Posterior cingulate gyrus (tissue), 11 donors: ENCODE measurements at regions of chr4 and their contacts with region 1.

Region 1: DNA sequence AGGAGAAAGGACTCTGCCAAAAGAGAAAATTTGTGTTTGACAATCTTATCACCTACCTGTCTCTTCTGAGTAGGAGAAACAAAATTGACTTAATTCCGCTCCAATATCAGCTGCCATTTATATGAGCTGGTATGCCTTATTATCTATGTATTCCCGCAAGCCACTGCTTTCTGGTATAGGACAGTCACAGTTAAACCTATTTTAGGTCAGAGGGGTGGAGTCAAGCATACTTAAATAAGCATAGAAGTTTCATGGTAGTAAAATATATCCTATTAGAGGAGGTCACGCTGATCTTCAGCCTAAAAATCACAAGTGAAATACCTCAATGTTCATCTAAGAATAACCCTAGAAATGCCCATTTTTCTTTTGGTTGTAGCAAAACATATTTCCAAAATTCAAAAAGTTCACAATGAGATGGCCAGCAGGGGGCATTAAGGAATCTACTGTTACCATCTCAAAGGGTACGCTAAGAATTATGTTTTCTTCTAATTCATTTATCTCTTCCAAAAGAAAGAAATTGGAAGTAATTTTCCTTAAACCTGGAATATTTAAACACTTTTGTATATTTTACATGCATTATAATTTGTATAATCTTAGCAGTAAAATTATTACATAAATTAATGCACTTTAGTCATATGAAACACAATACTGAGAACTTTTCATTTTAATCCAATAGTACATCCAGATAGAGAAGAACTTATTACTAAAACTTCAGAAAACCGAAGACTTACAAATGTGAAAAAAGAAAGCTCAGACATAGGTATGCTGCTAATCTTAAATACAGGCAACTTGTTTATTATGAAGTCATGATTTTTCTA is 10.5 kb downstream of the PPAT start:
- DNase-seq: peak in 1 of 10 donors; percentile 30

Region 2: DNA sequence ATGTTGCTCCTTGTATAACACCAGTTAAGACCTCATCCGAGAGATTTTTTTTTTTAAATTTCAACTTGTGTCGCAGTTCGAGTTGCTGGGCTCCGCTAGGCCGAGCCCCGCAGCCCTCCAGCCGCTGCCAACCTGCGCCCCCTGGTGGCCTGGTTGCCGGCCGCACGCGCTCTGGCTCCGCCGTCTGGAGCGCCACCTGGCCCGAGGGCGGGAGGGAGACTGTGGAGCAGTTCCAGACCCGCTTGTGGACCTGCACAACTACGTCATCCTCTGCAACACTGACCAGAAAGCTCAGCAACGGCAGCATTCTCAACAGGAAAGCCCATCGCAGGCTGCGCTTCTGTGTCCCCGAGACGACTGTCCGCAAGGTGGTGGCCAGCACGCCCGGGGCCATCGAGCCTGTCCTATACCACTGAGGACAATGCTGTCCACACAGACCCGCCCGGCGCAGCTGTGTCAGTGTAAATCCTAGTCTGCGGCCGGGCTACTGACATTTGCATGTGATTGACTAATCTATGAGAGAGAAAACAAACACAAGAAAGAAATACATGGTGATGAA is 119.7 kb after region 1 on chr4:
- intact Hi-C with region 1: loop called (anchors 1 kb)
- DNase-seq: peak; percentile 80 to 98 (median 90)

Region 3: GRCh38 chr4:56828784-56829535 is 404.1 kb after region 1 on chr4:
- intact Hi-C with region 1: loop called (anchors 10 kb)
- DNase-seq: no peak

Region 4: DNA sequence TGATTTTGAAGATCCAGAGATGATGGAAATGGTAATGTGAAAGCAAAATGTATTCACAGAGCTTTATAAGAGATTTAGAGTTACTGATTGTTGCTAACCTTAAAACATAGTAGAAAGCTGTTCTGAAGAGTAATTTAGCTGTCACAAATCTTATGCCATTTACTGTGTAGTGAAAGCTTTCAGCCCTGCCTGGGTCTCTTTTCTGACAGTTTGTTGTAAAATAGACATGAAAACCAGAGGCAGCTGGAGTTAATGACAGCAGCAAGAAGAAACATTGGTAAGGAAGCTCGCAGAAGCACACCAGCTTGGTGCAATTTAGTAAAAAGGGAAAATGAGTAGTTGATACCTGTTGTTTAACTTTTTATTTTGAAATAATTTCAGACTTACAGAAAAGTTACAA is 574.8 kb after region 1 on chr4:
- intact Hi-C with region 1: no loop called
- DNase-seq: no peak